MCF 10A (cell line): ENCODE measurements at regions of chr12 and their contacts with region 1.

Region 1: GRCh38 chr12:27014085-27014858 is at the start of gene TM7SF3:
- DNase-seq: peak; percentile 92
- H3K4me3 Mint-ChIP-seq: peak within 1 kb of the TSS; percentile 89
- H3K27ac Mint-ChIP-seq: peak within 1 kb of the TSS; percentile 92
- H3K4me1 Mint-ChIP-seq: peaks cover 33% of the 10 kb centered on the region
- H3K27me3 Mint-ChIP-seq: no peaks in the 10 kb centered on the region
- CTCF ChIP-seq: peak; percentile 92
- total RNA-seq, gene TM7SF3: 112 and 119 TPM in 2 replicates

Region 2: GRCh38 chr12:26113853-26114719 is 900.2 kb before region 1 on chr12:
- CTCF ChIA-PET with region 1: no interaction called
- POLR2A ChIA-PET with region 1: no interaction called
- intact Hi-C with region 1: loop called (anchors 10 kb)
- DNase-seq: peak; percentile 84
- H3K4me3 Mint-ChIP-seq: peak overlapping the region; percentile 72
- H3K27ac Mint-ChIP-seq: peak overlapping the region; percentile 89
- H3K4me1 Mint-ChIP-seq: peaks cover 22% of the 10 kb centered on the region
- H3K27me3 Mint-ChIP-seq: no peaks in the 10 kb centered on the region
- CTCF ChIP-seq: no peak

Region 3: GRCh38 chr12:26937875-26938700 is 76.2 kb before region 1 on chr12 and contains the starts of genes FGFR1OP2 and INTS13:
- CTCF ChIA-PET with region 1: interaction called, 3 read pairs
- POLR2A ChIA-PET with region 1: interaction called, 39 read pairs
- intact Hi-C with region 1: loop called (anchors 2 kb)
- DNase-seq: peak; percentile 99
- H3K4me3 Mint-ChIP-seq: peak within 1 kb of the TSS; percentile 91
- H3K27ac Mint-ChIP-seq: peak within 1 kb of the TSS; percentile 97
- H3K4me1 Mint-ChIP-seq: peaks cover 45% of the 10 kb centered on the region
- H3K27me3 Mint-ChIP-seq: no peaks in the 10 kb centered on the region
- CTCF ChIP-seq: no peak
- total RNA-seq, gene FGFR1OP2: 40.6 and 44.6 TPM in 2 replicates
- total RNA-seq, gene INTS13: 64.8 and 67.8 TPM in 2 replicates

Region 4: GRCh38 chr12:27003421-27004381 is 10.6 kb before region 1 on chr12:
- CTCF ChIA-PET with region 1: interaction called, 10 read pairs
- POLR2A ChIA-PET with region 1: interaction called, 27 read pairs
- intact Hi-C with region 1: no loop called
- DNase-seq: no peak
- H3K4me3 Mint-ChIP-seq: no peak overlapping the region
- H3K27ac Mint-ChIP-seq: no peak overlapping the region
- H3K4me1 Mint-ChIP-seq: peaks cover 15% of the 10 kb centered on the region
- H3K27me3 Mint-ChIP-seq: no peaks in the 10 kb centered on the region
- CTCF ChIP-seq: no peak

Region 5: DNA sequence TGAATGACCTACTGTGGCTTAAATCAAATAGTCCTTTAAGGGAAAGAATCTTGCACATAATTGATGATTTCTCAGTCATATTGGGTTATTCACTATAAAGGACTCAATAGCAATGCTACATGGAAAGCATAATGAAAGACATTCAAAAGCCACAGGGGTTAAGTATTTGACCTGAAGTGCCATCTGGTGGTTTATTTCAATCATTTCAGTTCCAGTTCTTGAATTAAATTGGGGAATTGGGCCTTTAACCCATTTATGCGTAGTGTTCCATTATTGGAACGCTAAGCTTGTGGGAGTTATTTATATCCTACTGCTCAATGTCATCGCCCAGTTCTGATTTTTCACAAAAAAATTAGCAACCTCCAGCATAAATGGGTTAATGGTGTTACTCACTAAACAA is 109.4 kb after region 1 on chr12:
- CTCF ChIA-PET with region 1: interaction called, 25 read pairs
- POLR2A ChIA-PET with region 1: interaction called, 36 read pairs
- intact Hi-C with region 1: loop called (anchors 1 kb)
- DNase-seq: peak; percentile 53
- H3K4me3 Mint-ChIP-seq: no peak overlapping the region
- H3K27ac Mint-ChIP-seq: no peak overlapping the region
- H3K4me1 Mint-ChIP-seq: no peaks in the 10 kb centered on the region
- H3K27me3 Mint-ChIP-seq: no peaks in the 10 kb centered on the region
- CTCF ChIP-seq: peak; percentile 34

Region 6: DNA sequence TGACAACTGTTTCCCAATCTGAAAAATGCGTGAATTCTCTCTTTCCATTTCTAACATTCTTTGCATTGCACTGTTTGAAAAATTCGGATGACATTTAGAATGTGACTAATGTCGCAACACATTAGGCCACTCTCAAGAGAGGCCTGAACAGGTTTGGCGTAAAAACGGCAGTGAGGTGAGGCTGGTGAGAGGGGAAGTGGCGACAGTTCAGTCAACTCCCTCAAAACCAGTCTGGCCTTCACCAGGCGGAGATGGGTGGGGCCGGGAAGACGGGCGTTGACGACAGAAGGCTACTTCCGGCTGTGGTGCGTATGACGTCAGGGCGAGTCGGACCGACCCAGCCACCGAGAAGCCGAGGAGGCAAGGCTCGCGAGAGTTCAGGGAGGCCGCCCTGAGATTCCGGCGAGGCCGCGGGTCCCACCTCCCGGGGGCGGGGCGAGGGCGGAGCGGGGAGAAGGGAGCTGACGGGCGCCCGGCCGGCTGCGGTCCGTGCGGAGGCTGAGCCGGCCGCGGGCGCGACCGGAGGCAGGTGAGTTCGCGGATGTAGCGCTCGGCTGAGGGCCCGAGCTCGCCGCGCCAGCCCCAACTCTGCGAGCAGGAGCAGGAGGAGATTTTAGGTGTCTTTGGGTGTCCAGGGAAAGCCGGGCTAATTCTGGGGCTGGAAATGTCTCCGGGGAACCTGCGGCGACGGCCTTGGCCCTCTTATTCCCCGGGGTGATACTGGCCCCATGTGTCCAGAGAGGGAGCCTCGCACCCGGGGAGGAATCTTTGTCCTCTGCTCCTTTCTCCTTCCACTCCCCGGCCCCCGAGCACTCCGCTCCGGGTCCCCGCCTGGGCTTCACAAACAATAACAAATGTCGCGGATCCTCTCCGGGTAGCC is 229.8 kb after region 1 on chr12 and contains the start of gene STK38L:
- CTCF ChIA-PET with region 1: interaction called, 4 read pairs
- POLR2A ChIA-PET with region 1: interaction called, 45 read pairs
- intact Hi-C with region 1: loop called (anchors 1 kb)
- DNase-seq: peak; percentile 95
- H3K4me3 Mint-ChIP-seq: peak within 1 kb of the TSS; percentile 99
- H3K27ac Mint-ChIP-seq: peak within 1 kb of the TSS; percentile 98
- H3K4me1 Mint-ChIP-seq: peaks cover 19% of the 10 kb centered on the region
- H3K27me3 Mint-ChIP-seq: no peaks in the 10 kb centered on the region
- CTCF ChIP-seq: peak; percentile 22
- total RNA-seq, gene STK38L: 18.1 and 19.9 TPM in 2 replicates

Region 7: GRCh38 chr12:27332407-27333301 is 318.4 kb after region 1 on chr12 and contains the start of gene BMAL2:
- CTCF ChIA-PET with region 1: interaction called, 4 read pairs
- POLR2A ChIA-PET with region 1: interaction called, 11 read pairs
- intact Hi-C with region 1: no loop called
- DNase-seq: peak; percentile 36
- H3K4me3 Mint-ChIP-seq: peak within 1 kb of the TSS; percentile 86
- H3K27ac Mint-ChIP-seq: peak within 1 kb of the TSS; percentile 98
- H3K4me1 Mint-ChIP-seq: peaks cover 47% of the 10 kb centered on the region
- H3K27me3 Mint-ChIP-seq: no peaks in the 10 kb centered on the region
- CTCF ChIP-seq: no peak
- total RNA-seq, gene BMAL2: 18.0 and 20.0 TPM in 2 replicates